ENCODE measurements at regions of chr12 and their contacts with region 1.

Region 1: DNA sequence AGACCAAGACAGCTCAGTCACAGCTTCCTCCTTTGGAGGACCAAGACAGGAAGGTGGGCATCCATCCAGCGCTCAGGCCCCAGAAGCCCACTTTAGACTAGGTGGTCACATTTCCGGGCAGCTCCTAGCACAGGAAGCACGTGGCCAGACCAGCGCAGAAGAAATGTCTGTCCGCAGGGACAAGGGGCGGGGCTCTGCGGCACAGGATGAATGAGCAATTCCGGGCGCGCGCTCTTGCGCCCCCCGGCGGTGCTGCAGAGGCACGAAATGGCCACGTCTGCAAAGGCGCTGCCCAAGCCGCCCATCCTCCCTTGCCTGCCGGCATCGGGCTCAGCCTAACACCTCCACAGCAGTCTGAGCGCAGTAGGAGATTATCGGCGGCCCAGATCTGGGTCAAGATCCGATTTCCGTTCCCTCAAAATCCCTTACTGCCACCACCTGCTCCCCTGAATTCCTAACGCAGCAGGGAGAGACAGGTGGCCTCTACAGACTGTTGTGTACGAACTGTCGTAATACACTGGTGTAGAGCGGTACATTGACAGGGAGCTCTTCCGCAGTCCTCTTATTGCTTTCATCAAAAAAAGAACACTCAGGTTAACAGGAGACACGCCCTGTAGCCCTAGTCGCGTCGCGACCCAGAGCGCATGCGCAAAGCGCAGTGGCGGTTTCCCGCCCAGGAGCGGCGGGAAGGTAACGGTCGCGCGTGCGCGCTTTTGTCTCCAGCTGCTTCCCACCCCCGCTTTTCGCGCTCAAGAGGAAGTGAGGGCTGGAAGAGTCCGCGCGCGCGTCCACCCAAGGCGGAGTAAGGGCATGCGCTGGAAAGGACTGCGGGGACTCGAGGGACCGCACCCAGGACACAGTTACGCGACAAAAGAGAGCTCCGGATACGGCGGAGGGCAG is 794 bp downstream of the TUBA1B start:
- H3K4me3 ChIP-seq: peak overlapping the region; percentile 95
- H3K27ac ChIP-seq: peak overlapping the region; percentile 99
- H3K4me1 ChIP-seq: peaks cover 11% of the 10 kb centered on the region
- CTCF ChIP-seq: peak; percentile 99

Region 2: GRCh38 chr12:48946205-48946604 is 184.2 kb before region 1 on chr12:
- CTCF ChIA-PET with region 1: no interaction called
- POLR2A ChIA-PET with region 1: no interaction called
- H3K4me3 ChIP-seq: no peak overlapping the region
- H3K27ac ChIP-seq: no peak overlapping the region
- H3K4me1 ChIP-seq: no peaks in the 10 kb centered on the region
- CTCF ChIP-seq: no peak

Region 3: GRCh38 chr12:49069507-49070346 is 60.7 kb before region 1 on chr12 and contains the start of gene RHEBL1:
- CTCF ChIA-PET with region 1: interaction called, 19 read pairs
- POLR2A ChIA-PET with region 1: interaction called, 41 read pairs
- H3K4me3 ChIP-seq: peak within 1 kb of the TSS; percentile 74
- H3K27ac ChIP-seq: peak within 1 kb of the TSS; percentile 34; the same call in 1 of the 2 replicates
- H3K4me1 ChIP-seq: peaks cover 4% of the 10 kb centered on the region
- CTCF ChIP-seq: peak; percentile 93

Region 4: DNA sequence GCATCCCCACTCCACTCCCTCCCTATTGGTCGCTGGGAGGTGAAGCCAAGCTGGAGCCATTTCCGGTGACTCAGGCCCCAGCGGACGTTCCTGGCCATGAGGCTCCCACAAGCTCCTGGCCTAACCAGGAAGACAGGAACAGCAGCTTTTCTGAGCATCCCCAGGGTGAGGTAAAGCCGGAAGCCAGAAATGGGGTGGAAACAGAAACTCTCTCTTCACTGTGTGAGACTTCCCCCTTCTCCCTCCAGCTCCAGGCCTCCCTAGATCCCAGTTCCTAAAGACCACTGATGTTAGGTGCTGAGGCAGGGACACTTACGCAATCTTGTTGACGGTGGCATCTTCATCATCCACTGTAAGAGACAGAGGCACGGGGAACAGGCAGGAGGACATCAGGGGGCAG is 24.8 kb before region 1 on chr12:
- CTCF ChIA-PET with region 1: interaction called, 19 read pairs
- POLR2A ChIA-PET with region 1: interaction called, 75 read pairs
- H3K4me3 ChIP-seq: no peak overlapping the region
- H3K27ac ChIP-seq: no peak overlapping the region
- H3K4me1 ChIP-seq: peaks cover 10% of the 10 kb centered on the region
- CTCF ChIP-seq: no peak

Region 5: DNA sequence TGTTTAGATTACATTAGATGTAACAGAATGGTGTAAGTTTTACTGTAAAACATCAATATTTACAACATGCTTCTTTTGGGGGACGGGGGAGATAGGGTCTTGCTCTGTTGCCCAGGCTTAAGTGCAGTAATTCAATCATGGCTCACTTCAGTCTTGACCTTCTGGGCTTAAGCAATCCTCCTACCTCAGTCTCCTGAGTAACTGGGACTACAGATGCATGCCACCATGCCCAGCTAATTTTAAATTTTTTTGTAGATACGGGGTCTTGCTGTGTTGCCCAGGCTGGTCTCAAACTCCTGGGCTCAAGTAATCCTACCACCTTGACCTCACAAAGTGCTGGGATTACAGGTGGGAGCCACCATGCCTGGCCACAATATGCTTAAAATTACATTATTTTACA is 34.7 kb after region 1 on chr12:
- CTCF ChIA-PET with region 1: interaction called, 5 read pairs
- POLR2A ChIA-PET with region 1: interaction called, 14 read pairs
- H3K4me3 ChIP-seq: no peak overlapping the region
- H3K27ac ChIP-seq: no peak overlapping the region
- H3K4me1 ChIP-seq: no peaks in the 10 kb centered on the region; the same call in 1 of the 2 replicates
- CTCF ChIP-seq: no peak

Region 6: DNA sequence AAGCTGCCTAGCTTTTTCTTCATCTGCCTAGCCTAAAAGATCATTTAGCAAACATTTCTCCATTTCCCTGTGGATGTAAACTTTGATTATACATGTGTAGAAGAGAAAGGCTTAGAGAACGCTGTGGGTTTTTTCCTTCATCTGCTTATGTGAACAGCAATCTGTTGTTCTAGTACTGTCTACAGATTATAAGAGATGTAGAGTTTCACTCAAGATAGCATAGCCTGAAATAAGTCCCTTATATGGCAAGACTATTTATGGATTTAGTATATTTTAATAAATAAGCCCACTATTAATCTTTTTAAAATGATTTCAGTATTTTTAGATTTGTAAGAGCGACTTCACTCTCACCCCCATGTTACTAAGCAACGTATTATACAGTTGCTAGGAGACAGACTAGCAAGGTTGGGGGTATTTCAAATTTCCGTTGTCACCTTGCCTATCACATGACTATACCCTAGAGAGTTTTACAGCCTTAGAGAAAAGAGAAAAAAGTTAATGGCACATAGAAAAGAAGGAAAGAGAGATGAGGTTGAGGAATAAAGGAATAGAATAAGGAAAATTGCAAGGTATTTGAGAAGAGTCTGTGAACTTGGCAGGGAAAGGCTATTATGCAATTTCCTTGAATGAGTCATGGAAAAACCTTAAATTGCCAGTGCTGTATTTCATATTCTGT is 70.7 kb after region 1 on chr12:
- CTCF ChIA-PET with region 1: interaction called, 4 read pairs
- POLR2A ChIA-PET with region 1: interaction called, 17 read pairs
- H3K4me3 ChIP-seq: no peak overlapping the region
- H3K27ac ChIP-seq: no peak overlapping the region
- H3K4me1 ChIP-seq: peaks cover 17% of the 10 kb centered on the region
- CTCF ChIP-seq: no peak

Region 7: GRCh38 chr12:49244176-49244575 is 113.8 kb after region 1 on chr12:
- CTCF ChIA-PET with region 1: interaction called, 3 read pairs
- POLR2A ChIA-PET with region 1: interaction called, 18 read pairs
- H3K4me3 ChIP-seq: no peak overlapping the region
- H3K27ac ChIP-seq: no peak overlapping the region
- H3K4me1 ChIP-seq: no peaks in the 10 kb centered on the region
- CTCF ChIP-seq: no peak

Measured in HEK293 (cell line).